ENCODE measurements at regions of chr4 and their contacts with region 1.

Region 1: GRCh38 chr4:169612871-169613859 is 782 bp upstream of the NEK1 start:
- DNase-seq: peak; percentile 30 to 89
- H3K4me3 ChIP-seq: peak overlapping the region; percentile 74 to 88
- H3K27ac ChIP-seq: peak overlapping the region; percentile 90 to 97
- H3K4me1 ChIP-seq: peaks cover 0 to 9% of the 10 kb centered on the region in 2 donors
- H3K27me3 ChIP-seq: no peaks in the 10 kb centered on the region
- CTCF ChIP-seq: peak; percentile 34 to 75 (median 64)

Region 2: DNA sequence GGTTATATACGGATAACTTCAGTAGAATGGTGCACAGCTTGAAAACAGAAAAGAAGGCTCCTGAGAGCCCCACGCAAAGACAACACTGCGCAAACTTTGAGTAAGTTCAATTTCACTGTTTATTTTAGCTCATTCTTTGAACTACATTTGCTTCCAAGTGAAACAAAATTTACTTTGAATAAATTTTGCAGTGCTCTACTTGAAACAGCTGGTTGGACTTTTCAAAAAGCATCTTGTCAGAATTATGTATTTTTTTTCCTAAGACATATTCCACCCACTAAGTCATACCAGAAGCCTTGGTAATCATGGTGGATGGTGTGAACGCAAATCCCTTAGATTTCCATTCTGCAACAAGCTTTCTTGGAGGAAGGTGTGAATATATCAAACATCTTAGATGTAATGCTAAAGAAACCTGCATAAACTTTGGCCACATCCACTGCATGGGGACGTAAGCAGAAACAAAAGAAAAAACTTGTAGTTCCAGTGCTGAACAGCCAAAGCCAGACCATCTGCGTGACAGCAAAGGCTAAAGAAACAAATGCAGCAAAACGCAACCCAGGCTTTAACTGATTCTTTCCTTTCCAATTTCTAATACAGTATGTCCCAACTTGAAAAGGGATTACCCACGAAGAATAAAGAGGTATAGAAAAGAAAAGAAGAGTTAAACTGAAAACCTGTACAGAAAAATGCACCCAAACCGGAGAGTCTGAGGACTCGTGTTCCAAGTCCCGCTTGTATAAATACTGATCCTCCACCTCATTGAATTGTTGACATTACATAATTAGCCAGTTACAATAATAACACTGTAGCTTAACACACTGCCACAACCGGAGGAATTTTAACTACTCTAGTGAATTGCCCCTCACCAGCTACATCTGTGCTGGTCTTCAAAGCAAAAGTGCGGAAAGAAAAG is 433.3 kb before region 1 on chr4:
- intact Hi-C with region 1: no loop called
- DNase-seq: no peak
- H3K4me3 ChIP-seq: peak overlapping the region in 1 of 2 donors; percentile 34
- H3K27ac ChIP-seq: no peak overlapping the region
- H3K4me1 ChIP-seq: peaks cover 4 to 7% of the 10 kb centered on the region in 2 donors
- H3K27me3 ChIP-seq: no peaks in the 10 kb centered on the region
- CTCF ChIP-seq: no peak

Region 3: GRCh38 chr4:169582205-169582604 is 31.0 kb before region 1 on chr4:
- intact Hi-C with region 1: no loop called
- DNase-seq: no peak
- H3K4me3 ChIP-seq: no peak overlapping the region
- H3K27ac ChIP-seq: no peak overlapping the region
- H3K4me1 ChIP-seq: no peaks in the 10 kb centered on the region
- H3K27me3 ChIP-seq: no peaks in the 10 kb centered on the region
- CTCF ChIP-seq: no peak

Region 4: GRCh38 chr4:169757575-169758184 is 144.5 kb after region 1 on chr4 and contains the start of gene HPF1:
- intact Hi-C with region 1: loop called (anchors 1 kb)
- DNase-seq: peak; percentile 76 to 96
- H3K4me3 ChIP-seq: peak within 1 kb of the TSS; percentile 65 to 91
- H3K27ac ChIP-seq: peak within 1 kb of the TSS; percentile 40 to 68
- H3K4me1 ChIP-seq: peaks cover 0 to 13% of the 10 kb centered on the region in 2 donors
- H3K27me3 ChIP-seq: no peaks in the 10 kb centered on the region
- CTCF ChIP-seq: no peak
- total RNA-seq, gene HPF1: 0.53 TPM

Measured in ascending aorta (tissue), 2 donors.